Activated CD4-positive, alpha-beta T cell treated with anti-CD3 and anti-CD28 coated beads, Interleukin-2, amount 10 ng/mL, durations not matched to agents 7 days and 5 days (primary cell): ENCODE measurements at regions of chr1 and their contacts with region 1.

Region 1: DNA sequence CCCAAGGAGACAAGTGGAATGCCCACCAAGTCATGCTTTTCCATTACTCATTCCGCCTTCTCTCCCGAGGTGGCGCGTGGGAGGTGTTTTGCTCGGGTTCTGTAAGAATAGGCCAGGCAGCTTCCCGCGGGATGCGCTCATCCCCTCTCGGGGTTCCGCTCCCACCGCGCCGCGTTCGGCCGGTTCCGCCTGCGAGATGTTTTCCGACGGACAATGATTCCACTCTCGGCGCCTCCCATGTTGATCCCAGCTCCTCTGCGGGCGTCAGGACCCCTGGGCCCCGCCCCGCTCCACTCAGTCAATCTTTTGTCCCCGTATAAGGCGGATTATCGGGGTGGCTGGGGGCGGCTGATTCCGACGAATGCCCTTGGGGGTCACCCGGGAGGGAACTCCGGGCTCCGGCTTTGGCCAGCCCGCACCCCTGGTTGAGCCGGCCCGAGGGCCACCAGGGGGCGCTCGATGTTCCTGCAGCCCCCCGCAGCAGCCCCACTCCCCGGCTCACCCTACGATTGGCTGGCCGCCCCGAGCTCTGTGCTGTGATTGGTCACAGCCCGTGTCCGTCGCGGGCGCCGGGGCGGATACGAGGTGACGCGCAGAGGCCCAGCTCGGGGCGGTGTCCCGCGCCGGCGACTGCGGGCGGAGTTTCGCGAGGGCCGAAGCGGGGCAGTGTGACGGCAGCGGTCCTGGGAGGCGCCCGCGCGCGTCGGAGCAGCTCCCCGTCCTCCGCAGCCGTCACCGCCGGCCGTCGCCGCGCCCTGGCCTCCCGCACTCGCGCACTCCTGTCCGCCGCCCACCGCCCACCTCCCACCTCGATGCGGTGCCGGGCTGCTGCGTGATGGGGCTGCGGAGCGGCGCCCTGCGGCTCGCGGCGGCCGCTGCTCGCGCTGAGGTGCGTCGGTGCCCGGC is at the start of gene KIF1B:
- DNase-seq: peak; percentile 96
- H3K4me3 Mint-ChIP-seq: peak within 1 kb of the TSS; percentile 88
- H3K27ac Mint-ChIP-seq: peak within 1 kb of the TSS; percentile 74
- H3K4me1 Mint-ChIP-seq: peaks cover 32% of the 10 kb centered on the region
- H3K27me3 Mint-ChIP-seq: no peaks in the 10 kb centered on the region
- total RNA-seq, gene KIF1B: 14.1 to 15.6 TPM

Region 2: GRCh38 chr1:10143961-10144485 is 66.1 kb before region 1 on chr1:
- CTCF ChIA-PET with region 1: no interaction called
- POLR2A ChIA-PET with region 1: no interaction called
- DNase-seq: no peak
- H3K4me3 Mint-ChIP-seq: no peak overlapping the region
- H3K27ac Mint-ChIP-seq: no peak overlapping the region
- H3K4me1 Mint-ChIP-seq: no peaks in the 10 kb centered on the region
- H3K27me3 Mint-ChIP-seq: no peaks in the 10 kb centered on the region

Region 3: GRCh38 chr1:10252508-10252907 is 42.4 kb after region 1 on chr1:
- CTCF ChIA-PET with region 1: interaction called, 10 read pairs
- POLR2A ChIA-PET with region 1: no interaction called
- DNase-seq: no peak
- H3K4me3 Mint-ChIP-seq: no peak overlapping the region
- H3K27ac Mint-ChIP-seq: no peak overlapping the region
- H3K4me1 Mint-ChIP-seq: peaks cover 5% of the 10 kb centered on the region
- H3K27me3 Mint-ChIP-seq: no peaks in the 10 kb centered on the region

Region 4: GRCh38 chr1:10324627-10325026 is 114.5 kb after region 1 on chr1:
- CTCF ChIA-PET with region 1: interaction called, 10 read pairs
- POLR2A ChIA-PET with region 1: interaction called, 4 read pairs
- DNase-seq: no peak
- H3K4me3 Mint-ChIP-seq: peak overlapping the region; percentile 46
- H3K27ac Mint-ChIP-seq: peak overlapping the region; percentile 83
- H3K4me1 Mint-ChIP-seq: peaks cover 15% of the 10 kb centered on the region
- H3K27me3 Mint-ChIP-seq: no peaks in the 10 kb centered on the region

Region 5: DNA sequence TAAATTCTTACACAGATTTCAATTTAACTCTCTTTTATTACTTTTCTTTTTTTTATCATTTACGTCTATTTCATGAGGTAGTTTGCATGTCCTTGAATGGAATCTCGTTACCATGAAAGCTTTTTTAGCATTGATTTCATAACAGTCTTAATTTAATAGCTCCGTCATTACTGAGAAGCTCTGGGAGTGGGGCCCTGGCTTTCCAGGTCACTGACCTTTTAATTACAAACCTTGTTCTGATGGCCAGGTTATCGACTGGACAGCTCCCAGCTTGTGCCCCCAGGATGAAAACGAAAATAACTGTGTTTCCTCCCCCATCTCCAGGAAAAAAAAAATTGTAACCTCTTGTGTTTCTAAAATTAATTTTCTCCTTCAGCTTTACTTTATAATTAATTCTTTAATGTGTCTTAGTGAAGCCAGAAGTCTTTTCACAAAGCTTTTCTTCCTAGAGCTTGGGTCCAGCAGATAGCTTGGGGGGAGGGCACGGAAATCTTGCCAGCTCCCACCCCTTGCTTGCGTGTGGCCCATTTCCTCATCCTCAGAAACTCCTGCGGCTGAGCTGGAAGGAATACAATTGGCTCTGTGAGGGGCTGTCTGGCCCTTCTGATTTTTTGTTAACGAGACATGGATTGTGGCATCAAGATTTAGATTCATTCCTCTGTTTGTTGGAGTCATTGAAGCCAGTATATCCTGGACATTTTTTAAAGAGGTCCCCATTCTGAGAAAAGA is 330.3 kb after region 1 on chr1:
- CTCF ChIA-PET with region 1: no interaction called
- POLR2A ChIA-PET with region 1: no interaction called
- DNase-seq: no peak
- H3K4me3 Mint-ChIP-seq: no peak overlapping the region
- H3K27ac Mint-ChIP-seq: no peak overlapping the region
- H3K4me1 Mint-ChIP-seq: peaks cover 34% of the 10 kb centered on the region
- H3K27me3 Mint-ChIP-seq: no peaks in the 10 kb centered on the region